AG04449 (cell line): ENCODE measurements at regions of chr6 and their contacts with region 1.

Region 1: DNA sequence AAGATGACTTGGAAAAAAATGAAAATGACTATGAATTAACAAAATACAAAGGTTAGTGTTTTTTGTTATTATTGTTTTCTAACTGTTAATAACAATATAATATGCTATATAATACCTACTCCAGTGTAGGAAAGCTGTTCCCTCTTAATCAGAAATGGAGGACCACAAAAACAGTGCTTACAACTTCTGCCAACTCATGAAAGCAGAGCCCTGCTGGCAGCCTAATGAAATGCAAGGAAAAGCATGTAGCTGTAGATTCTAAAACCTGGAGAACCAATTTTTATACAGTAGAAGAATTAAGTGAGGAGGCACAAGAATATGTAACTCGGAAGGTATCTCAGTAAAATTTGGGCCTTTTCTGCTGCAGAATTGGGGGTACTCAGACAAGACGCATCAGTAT is 29.4 kb downstream of the PHIP start:
- DNase-seq: no peak
- H3K4me3 ChIP-seq: no peak overlapping the region
- CTCF ChIP-seq: peak; percentile 58

Region 2: DNA sequence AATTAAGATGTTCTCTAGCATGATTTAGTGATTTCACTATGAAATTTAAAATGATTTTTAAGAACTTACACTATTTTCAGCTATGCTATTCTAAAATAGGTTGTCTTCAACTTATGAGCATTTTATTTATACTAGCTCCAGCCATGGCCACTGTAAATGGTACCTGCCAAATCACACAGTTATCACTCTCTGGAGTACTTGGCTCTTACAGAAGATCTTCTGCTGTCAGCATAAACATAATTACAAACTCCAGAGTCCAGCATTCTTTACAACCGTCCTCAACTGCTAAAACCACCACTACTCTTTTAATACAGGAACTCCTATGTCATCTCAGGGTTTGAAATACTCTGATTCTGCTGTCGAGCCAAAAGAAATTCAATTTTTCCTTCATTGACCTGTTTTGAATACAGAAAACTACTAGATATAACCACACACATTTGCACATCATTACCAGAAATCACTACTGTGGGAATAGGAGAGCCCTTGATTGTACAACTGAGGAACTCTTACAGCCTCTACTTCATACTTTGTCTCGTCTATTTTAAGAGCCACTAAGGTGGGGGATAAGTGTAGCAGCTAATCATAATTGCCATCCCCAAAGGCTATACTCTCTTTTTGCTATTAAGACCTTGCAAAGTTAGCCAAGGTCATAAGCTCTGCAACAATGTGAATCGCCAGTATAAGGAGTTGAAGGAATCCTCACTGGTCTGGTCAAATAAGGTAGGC is 64.2 kb before region 1 on chr6:
- CTCF ChIA-PET with region 1: no interaction called
- POLR2A ChIA-PET with region 1: no interaction called
- DNase-seq: no peak
- H3K4me3 ChIP-seq: no peak overlapping the region
- CTCF ChIP-seq: no peak

Region 3: GRCh38 chr6:79062708-79063107 is 14.1 kb after region 1 on chr6:
- CTCF ChIA-PET with region 1: interaction called, 25 read pairs
- POLR2A ChIA-PET with region 1: no interaction called
- DNase-seq: no peak
- H3K4me3 ChIP-seq: no peak overlapping the region
- CTCF ChIP-seq: no peak